GM12878 (cell line): ENCODE measurements at regions of chr6 and their contacts with region 1.

Region 1: GRCh38 chr6:158793432-158793831 is 25.7 kb downstream of the EZR start:
- DNase-seq: no peak
- ATAC-seq: peak; percentile 74
- H3K4me3 ChIP-seq: 0 out of 2 replicates have a peak overlapping the region, but pooled peaks have one; percentile 36
- H3K27ac ChIP-seq: no peak overlapping the region
- H3K4me1 ChIP-seq: peaks cover 65% of the 10 kb centered on the region
- H3K27me3 ChIP-seq: no peaks in the 10 kb centered on the region
- CTCF ChIP-seq: peak; percentile 62 to 69 (median 68)
- EP300 ChIP-seq: no peak
- POLR2A ChIP-seq: no peak
- RAD21 ChIP-seq: peak; percentile 82

Region 2: GRCh38 chr6:158718461-158719046 is 74.9 kb before region 1 on chr6:
- CTCF ChIA-PET with region 1: interaction called, 12 read pairs
- POLR2A ChIA-PET with region 1: interaction called, 6 read pairs
- RAD21 ChIA-PET with region 1: interaction called, 3 read pairs
- SMC1A ChIA-PET with region 1: interaction called, 6 read pairs
- in situ Hi-C with region 1: no loop called
- intact Hi-C with region 1: loop called (anchors 5 kb)
- DNase-seq: no peak
- ATAC-seq: no peak
- H3K4me3 ChIP-seq: no peak overlapping the region
- H3K27ac ChIP-seq: 0 out of 2 replicates have a peak overlapping the region, but pooled peaks have one; percentile 79
- H3K4me1 ChIP-seq: peaks cover 50% of the 10 kb centered on the region
- H3K27me3 ChIP-seq: no peaks in the 10 kb centered on the region
- CTCF ChIP-seq: peak in 2 of 3 experiments; percentile 29 to 61; a peak in 4 of 6 replicates
- EP300 ChIP-seq: no peak
- POLR2A ChIP-seq: no peak
- RAD21 ChIP-seq: peak; percentile 57

Region 3: GRCh38 chr6:158803733-158804143 is 10.3 kb after region 1 on chr6:
- CTCF ChIA-PET with region 1: interaction called, 45 read pairs
- POLR2A ChIA-PET with region 1: interaction called, 21 read pairs
- RAD21 ChIA-PET with region 1: interaction called, 36 read pairs
- SMC1A ChIA-PET with region 1: interaction called, 73 read pairs
- in situ Hi-C with region 1: no loop called
- intact Hi-C with region 1: no loop called
- DNase-seq: no peak
- ATAC-seq: peak; percentile 65
- H3K4me3 ChIP-seq: peak overlapping the region; percentile 55; the same call in 1 of the 2 replicates
- H3K27ac ChIP-seq: peak overlapping the region; percentile 96
- H3K4me1 ChIP-seq: peaks cover 72% of the 10 kb centered on the region
- H3K27me3 ChIP-seq: no peaks in the 10 kb centered on the region
- CTCF ChIP-seq: no peak
- EP300 ChIP-seq: 0 out of 4 replicates have a peak, but pooled peaks have one; percentile 19 to 40
- POLR2A ChIP-seq: peak; percentile 50; the same call in 1 of the 2 replicates
- RAD21 ChIP-seq: no peak

Region 4: GRCh38 chr6:158819213-158819909 is 25.9 kb after region 1 on chr6 and contains the start of gene EZR:
- CTCF ChIA-PET with region 1: interaction called, 97 read pairs
- POLR2A ChIA-PET with region 1: interaction called, 27 read pairs
- RAD21 ChIA-PET with region 1: interaction called, 65 read pairs
- SMC1A ChIA-PET with region 1: interaction called, 68 read pairs
- in situ Hi-C with region 1: no loop called
- intact Hi-C with region 1: loop called (anchors 1 kb)
- DNase-seq: no peak
- ATAC-seq: peak; percentile 66
- H3K4me3 ChIP-seq: peak within 1 kb of the TSS; percentile 82
- H3K27ac ChIP-seq: peak within 1 kb of the TSS; percentile 66
- H3K4me1 ChIP-seq: peaks cover 14% of the 10 kb centered on the region
- H3K27me3 ChIP-seq: no peaks in the 10 kb centered on the region
- CTCF ChIP-seq: no peak; a peak in 1 of 6 replicates
- EP300 ChIP-seq: no peak
- POLR2A ChIP-seq: peak; percentile 93
- RAD21 ChIP-seq: 0 out of 2 replicates have a peak, but pooled peaks have one; percentile 8
- polyA plus RNA-seq, gene EZR: 79.1 to 98.6 TPM